HCT116 (cell line): ENCODE measurements at regions of chr9 and their contacts with region 1.

Region 1: GRCh38 chr9:6353851-6354686 is 25.9 kb downstream of the TPD52L3 start:
- DNase-seq: peak; percentile 49
- ATAC-seq: peak; percentile 98
- H3K4me3 ChIP-seq: no peak overlapping the region
- H3K27ac ChIP-seq: no peak overlapping the region
- H3K4me1 ChIP-seq: peaks cover 0 to 5% of the 10 kb centered on the region in 2 experiments; a peak in 1 of 4 replicates
- H3K27me3 ChIP-seq: no peaks in the 10 kb centered on the region
- CTCF ChIP-seq: peak; percentile 65 to 87 (median 77)
- POLR2A ChIP-seq: no peak
- RAD21 ChIP-seq: peak; percentile 91

Region 2: GRCh38 chr9:5529683-5530221 is 824.3 kb before region 1 on chr9:
- CTCF ChIA-PET with region 1: no interaction called
- POLR2A ChIA-PET with region 1: no interaction called
- RAD21 ChIA-PET with region 1: no interaction called
- intact Hi-C with region 1: no loop called
- DNase-seq: no peak
- ATAC-seq: no peak
- H3K4me3 ChIP-seq: no peak overlapping the region
- H3K27ac ChIP-seq: no peak overlapping the region
- H3K4me1 ChIP-seq: no peaks in the 10 kb centered on the region
- H3K27me3 ChIP-seq: no peaks in the 10 kb centered on the region
- CTCF ChIP-seq: no peak
- POLR2A ChIP-seq: no peak
- RAD21 ChIP-seq: no peak

Region 3: GRCh38 chr9:6197330-6197729 is 156.7 kb before region 1 on chr9:
- CTCF ChIA-PET with region 1: no interaction called
- POLR2A ChIA-PET with region 1: no interaction called
- RAD21 ChIA-PET with region 1: no interaction called
- intact Hi-C with region 1: no loop called
- DNase-seq: peak; percentile 12
- ATAC-seq: peak; percentile 62
- H3K4me3 ChIP-seq: no peak overlapping the region
- H3K27ac ChIP-seq: no peak overlapping the region
- H3K4me1 ChIP-seq: no peaks in the 10 kb centered on the region
- H3K27me3 ChIP-seq: no peaks in the 10 kb centered on the region
- CTCF ChIP-seq: peak; percentile 15 to 50 (median 32); a peak in 4 of 6 replicates
- POLR2A ChIP-seq: no peak
- RAD21 ChIP-seq: peak; percentile 53

Region 4: DNA sequence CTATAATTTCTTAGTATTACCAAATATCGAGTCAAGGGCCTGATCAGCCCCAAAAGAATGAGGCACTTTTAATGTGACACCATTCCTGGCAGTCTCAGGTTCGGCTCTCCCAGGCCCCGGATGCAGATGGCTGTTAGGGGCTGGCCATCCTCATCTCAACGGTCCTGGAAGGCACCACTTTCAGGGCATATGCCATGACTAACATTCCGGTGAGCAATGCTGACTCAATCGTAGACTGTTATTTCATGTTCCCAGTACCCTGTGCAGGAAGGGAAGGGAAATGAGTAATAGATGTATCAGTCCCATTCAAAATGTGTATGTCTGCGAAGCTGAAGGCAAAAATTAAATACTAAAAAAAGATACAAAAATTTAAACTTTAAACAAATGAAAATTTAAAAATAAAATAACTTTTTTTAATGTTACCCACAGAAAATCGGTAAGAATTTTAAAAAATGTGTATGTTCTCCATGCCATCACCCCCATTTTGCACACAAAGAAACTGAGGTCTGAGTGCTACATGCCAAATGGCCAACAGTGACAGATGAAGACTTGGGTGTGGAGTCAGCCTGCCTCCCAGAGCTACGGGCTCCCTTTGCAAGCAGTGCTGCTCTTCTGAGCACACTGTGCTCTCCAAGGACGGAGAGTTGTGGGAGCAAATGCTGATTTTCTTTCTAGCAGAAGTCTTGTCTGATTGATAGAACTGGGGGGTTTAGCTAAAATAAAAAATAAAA is 212.5 kb after region 1 on chr9:
- CTCF ChIA-PET with region 1: interaction called, 8 read pairs
- POLR2A ChIA-PET with region 1: interaction called, 3 read pairs
- RAD21 ChIA-PET with region 1: no interaction called
- intact Hi-C with region 1: loop called (anchors 1 kb)
- DNase-seq: peak; percentile 95
- ATAC-seq: peak; percentile 85
- H3K4me3 ChIP-seq: peak overlapping the region; percentile 24 to 28
- H3K27ac ChIP-seq: peak overlapping the region; percentile 93
- H3K4me1 ChIP-seq: peaks cover 33 to 56% of the 10 kb centered on the region in 2 experiments
- H3K27me3 ChIP-seq: no peaks in the 10 kb centered on the region
- CTCF ChIP-seq: no peak
- POLR2A ChIP-seq: no peak
- RAD21 ChIP-seq: no peak

Region 5: GRCh38 chr9:6667633-6668280 is 313.7 kb after region 1 on chr9:
- CTCF ChIA-PET with region 1: interaction called, 5 read pairs
- POLR2A ChIA-PET with region 1: no interaction called
- RAD21 ChIA-PET with region 1: no interaction called
- intact Hi-C with region 1: loop called (anchors 1 kb)
- DNase-seq: no peak
- ATAC-seq: peak; percentile 82
- H3K4me3 ChIP-seq: no peak overlapping the region
- H3K27ac ChIP-seq: no peak overlapping the region
- H3K4me1 ChIP-seq: peaks cover 0 to 9% of the 10 kb centered on the region in 2 experiments; a peak in 1 of 4 replicates
- H3K27me3 ChIP-seq: no peaks in the 10 kb centered on the region
- CTCF ChIP-seq: peak; percentile 57 to 72 (median 63); a peak in 5 of 6 replicates
- POLR2A ChIP-seq: no peak
- RAD21 ChIP-seq: peak; percentile 62

Region 6: GRCh38 chr9:6739218-6739617 is 385.1 kb after region 1 on chr9:
- CTCF ChIA-PET with region 1: interaction called, 11 read pairs
- POLR2A ChIA-PET with region 1: no interaction called
- RAD21 ChIA-PET with region 1: no interaction called
- intact Hi-C with region 1: loop called (anchors 1 kb)
- DNase-seq: peak; percentile 38
- ATAC-seq: peak; percentile 95
- H3K4me3 ChIP-seq: no peak overlapping the region
- H3K27ac ChIP-seq: no peak overlapping the region
- H3K4me1 ChIP-seq: no peaks in the 10 kb centered on the region
- H3K27me3 ChIP-seq: no peaks in the 10 kb centered on the region
- CTCF ChIP-seq: peak; percentile 37 to 57 (median 55); a peak in 5 of 6 replicates
- POLR2A ChIP-seq: no peak
- RAD21 ChIP-seq: peak; percentile 75